MCF 10A (cell line): ENCODE measurements at regions of chr20 and their contacts with region 1.

Region 1: GRCh38 chr20:47272893-47273590 is 83.5 kb downstream of the ZMYND8 start:
- DNase-seq: peak; percentile 89
- H3K4me3 Mint-ChIP-seq: peak overlapping the region; percentile 52
- H3K27ac Mint-ChIP-seq: peak overlapping the region; percentile 99
- H3K4me1 Mint-ChIP-seq: peaks cover 37% of the 10 kb centered on the region
- H3K27me3 Mint-ChIP-seq: no peaks in the 10 kb centered on the region
- CTCF ChIP-seq: peak; percentile 66

Region 2: GRCh38 chr20:46752728-46753127 is 520.3 kb before region 1 on chr20:
- CTCF ChIA-PET with region 1: interaction called, 53 read pairs
- POLR2A ChIA-PET with region 1: interaction called, 3 read pairs
- intact Hi-C with region 1: loop called (anchors 1 kb)
- DNase-seq: peak; percentile 61
- H3K4me3 Mint-ChIP-seq: no peak overlapping the region
- H3K27ac Mint-ChIP-seq: no peak overlapping the region
- H3K4me1 Mint-ChIP-seq: peaks cover 5% of the 10 kb centered on the region
- H3K27me3 Mint-ChIP-seq: peaks cover 15% of the 10 kb centered on the region
- CTCF ChIP-seq: peak; percentile 59

Region 3: DNA sequence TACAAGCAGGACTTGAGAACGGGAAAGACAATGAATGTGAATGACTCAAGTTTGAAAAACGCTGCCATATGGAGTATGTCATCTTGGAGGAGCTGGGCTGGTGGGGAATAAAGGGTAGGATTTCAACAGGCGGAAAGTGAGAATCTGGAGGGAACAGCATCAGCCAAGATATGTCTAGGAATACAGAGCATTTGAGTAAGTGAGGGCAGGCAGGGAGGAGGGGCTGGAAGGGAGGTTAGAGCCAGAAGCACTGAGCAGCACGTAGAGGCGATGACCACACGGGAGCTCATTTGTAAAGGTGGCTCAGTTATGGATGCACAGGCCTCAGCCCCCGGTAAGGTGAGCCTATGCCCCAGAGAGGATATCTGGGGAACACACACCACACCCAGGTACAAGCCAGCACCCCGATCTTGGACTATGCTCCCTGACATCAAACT is 31.7 kb before region 1 on chr20:
- CTCF ChIA-PET with region 1: interaction called, 12 read pairs
- POLR2A ChIA-PET with region 1: interaction called, 4 read pairs
- intact Hi-C with region 1: no loop called
- DNase-seq: no peak
- H3K4me3 Mint-ChIP-seq: no peak overlapping the region
- H3K27ac Mint-ChIP-seq: peak overlapping the region; percentile 27
- H3K4me1 Mint-ChIP-seq: peaks cover 5% of the 10 kb centered on the region
- H3K27me3 Mint-ChIP-seq: no peaks in the 10 kb centered on the region
- CTCF ChIP-seq: no peak

Region 4: DNA sequence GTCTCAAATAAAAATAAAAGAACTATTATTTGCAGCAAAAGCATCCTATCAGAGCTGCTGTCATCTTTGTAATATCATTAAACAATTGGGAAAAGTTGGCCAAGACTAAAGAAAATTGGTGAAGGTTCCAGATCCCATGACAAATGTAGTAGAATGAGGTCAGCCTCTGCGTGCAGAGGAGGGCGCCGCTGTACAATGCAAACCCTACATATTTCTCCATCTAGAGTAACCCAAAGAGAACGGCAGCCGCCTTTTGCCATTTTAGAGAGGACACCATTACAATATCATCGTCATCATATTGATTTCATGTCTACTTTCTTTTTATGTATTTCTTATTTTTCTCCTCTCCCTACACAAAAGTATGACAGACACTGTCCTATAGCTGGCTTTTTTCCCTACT is 23.9 kb after region 1 on chr20:
- CTCF ChIA-PET with region 1: interaction called, 44 read pairs
- POLR2A ChIA-PET with region 1: interaction called, 8 read pairs
- intact Hi-C with region 1: no loop called
- DNase-seq: peak; percentile 20
- H3K4me3 Mint-ChIP-seq: no peak overlapping the region
- H3K27ac Mint-ChIP-seq: peak overlapping the region; percentile 29
- H3K4me1 Mint-ChIP-seq: peaks cover 13% of the 10 kb centered on the region
- H3K27me3 Mint-ChIP-seq: no peaks in the 10 kb centered on the region
- CTCF ChIP-seq: no peak

Region 5: GRCh38 chr20:47334022-47334551 is 61.0 kb after region 1 on chr20:
- CTCF ChIA-PET with region 1: interaction called, 17 read pairs
- POLR2A ChIA-PET with region 1: interaction called, 10 read pairs
- intact Hi-C with region 1: loop called (anchors 1 kb)
- DNase-seq: peak; percentile 96
- H3K4me3 Mint-ChIP-seq: peak overlapping the region; percentile 72
- H3K27ac Mint-ChIP-seq: peak overlapping the region; percentile 96
- H3K4me1 Mint-ChIP-seq: peaks cover 67% of the 10 kb centered on the region
- H3K27me3 Mint-ChIP-seq: no peaks in the 10 kb centered on the region
- CTCF ChIP-seq: no peak

Region 6: DNA sequence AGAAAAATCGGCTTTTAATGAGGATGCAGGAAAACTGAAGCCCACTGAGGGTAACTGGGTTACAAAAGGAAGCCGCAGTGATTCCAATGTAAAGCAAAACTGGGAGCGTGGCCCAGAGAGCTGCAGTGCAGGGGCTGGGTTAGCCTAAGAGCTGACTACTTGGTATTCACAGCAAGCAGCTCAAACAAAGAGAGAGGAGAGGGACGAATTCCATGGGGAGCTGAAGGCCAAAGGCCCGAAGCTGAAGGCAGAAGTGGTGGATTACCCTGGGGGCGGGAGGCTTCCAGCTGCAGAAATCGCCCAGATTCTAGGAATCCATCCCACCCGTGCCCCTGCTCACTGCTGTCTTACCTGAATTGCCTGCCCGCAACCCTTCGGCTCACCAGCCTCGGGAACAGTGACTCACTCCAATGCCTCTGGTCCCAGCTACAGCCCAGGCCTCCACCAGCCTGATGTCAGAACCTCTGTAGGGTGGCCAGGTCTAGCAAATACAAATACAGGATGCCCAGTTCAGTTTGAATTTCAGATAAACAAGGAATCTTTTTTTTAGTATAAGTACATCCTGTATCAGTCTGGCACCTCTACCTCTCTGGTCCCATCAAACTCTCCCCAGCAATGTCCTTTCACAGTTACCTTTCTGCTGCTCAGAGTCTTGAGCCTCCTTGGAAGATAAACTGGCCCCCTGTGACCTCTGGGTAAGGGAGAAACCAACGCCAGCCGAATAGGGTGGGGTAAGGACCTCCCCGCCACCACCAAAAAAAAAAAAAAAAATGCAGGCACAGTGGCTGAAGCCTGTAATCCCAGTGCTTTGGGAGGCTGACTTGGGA is 98.0 kb after region 1 on chr20:
- CTCF ChIA-PET with region 1: interaction called, 581 read pairs
- POLR2A ChIA-PET with region 1: interaction called, 64 read pairs
- intact Hi-C with region 1: no loop called
- DNase-seq: peak; percentile 62
- H3K4me3 Mint-ChIP-seq: no peak overlapping the region
- H3K27ac Mint-ChIP-seq: no peak overlapping the region
- H3K4me1 Mint-ChIP-seq: peaks cover 9% of the 10 kb centered on the region
- H3K27me3 Mint-ChIP-seq: no peaks in the 10 kb centered on the region
- CTCF ChIP-seq: no peak

Region 7: GRCh38 chr20:47464380-47465101 is 191.5 kb after region 1 on chr20:
- CTCF ChIA-PET with region 1: interaction called, 5 read pairs
- POLR2A ChIA-PET with region 1: interaction called, 6 read pairs
- intact Hi-C with region 1: loop called (anchors 1 kb)
- DNase-seq: peak; percentile 99
- H3K4me3 Mint-ChIP-seq: peak overlapping the region; percentile 51
- H3K27ac Mint-ChIP-seq: peak overlapping the region; percentile 72
- H3K4me1 Mint-ChIP-seq: peaks cover 38% of the 10 kb centered on the region
- H3K27me3 Mint-ChIP-seq: no peaks in the 10 kb centered on the region
- CTCF ChIP-seq: no peak